ENCODE measurements at regions of chr15 and their contacts with region 1.

Region 1: GRCh38 chr15:49282366-49282765 is 112.3 kb downstream of the GALK2 start:
- DNase-seq: no peak
- H3K4me3 ChIP-seq: no peak overlapping the region
- H3K27ac ChIP-seq: no peak overlapping the region
- H3K4me1 ChIP-seq: no peaks in the 10 kb centered on the region
- H3K27me3 ChIP-seq: no peaks in the 10 kb centered on the region
- CTCF ChIP-seq: no peak

Region 2: GRCh38 chr15:49331951-49332350 is 49.6 kb after region 1 on chr15:
- CTCF ChIA-PET with region 1: no interaction called
- dilution Hi-C with region 1: loop called (anchors 5 kb)
- in situ Hi-C with region 1: no loop called
- intact Hi-C with region 1: no loop called
- DNase-seq: no peak
- H3K4me3 ChIP-seq: no peak overlapping the region
- H3K27ac ChIP-seq: no peak overlapping the region
- H3K4me1 ChIP-seq: no peaks in the 10 kb centered on the region
- H3K27me3 ChIP-seq: no peaks in the 10 kb centered on the region
- CTCF ChIP-seq: no peak